CD4-positive, alpha-beta memory T cell (primary cell): ENCODE measurements at regions of chr3 and their contacts with region 1.

Region 1: DNA sequence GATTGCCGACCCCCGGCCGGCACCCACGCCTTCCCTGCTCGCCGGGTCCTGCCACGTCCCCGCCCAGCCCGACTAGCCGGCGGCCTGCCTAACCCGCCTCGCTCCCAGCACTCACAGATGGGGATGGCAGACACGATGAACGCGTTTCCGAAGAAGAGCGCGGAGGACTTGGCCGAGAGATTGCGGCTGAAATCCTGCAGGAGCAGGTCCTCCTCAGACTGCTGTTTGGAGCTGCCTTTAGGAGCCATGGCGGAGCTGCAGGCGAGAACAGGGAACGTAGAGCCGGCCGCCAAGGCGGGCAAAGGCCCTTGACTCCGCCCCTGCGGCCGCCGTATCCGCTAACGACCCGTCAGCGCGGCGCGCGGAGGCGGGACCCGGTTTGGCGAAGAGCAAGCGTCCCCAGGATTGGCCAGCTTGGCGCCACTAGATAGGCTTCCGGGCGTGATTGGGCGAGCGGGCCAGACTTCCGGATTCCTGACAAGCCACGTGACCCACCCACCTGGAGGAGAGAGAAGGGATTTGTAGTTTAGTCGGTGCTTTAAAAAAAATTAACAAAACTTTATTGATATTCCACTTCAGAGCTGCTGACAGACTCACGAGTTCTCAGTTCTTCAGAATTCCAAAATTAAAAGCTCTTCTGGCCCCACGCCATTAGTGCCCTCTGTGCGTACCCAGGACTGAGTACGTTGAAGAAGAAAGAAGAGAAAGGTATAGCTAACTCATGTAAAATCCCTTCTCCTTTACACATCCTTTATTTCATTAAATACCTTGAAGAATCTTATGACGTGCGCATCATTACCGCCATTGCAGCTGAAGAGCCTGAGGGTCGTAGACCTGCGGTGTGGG is at the start of gene SSR3:
- DNase-seq: peak; percentile 97 to 99 (median 99)
- H3K4me3 ChIP-seq: peak within 1 kb of the TSS; percentile 67 to 97
- H3K4me3 Mint-ChIP-seq: peak within 1 kb of the TSS; percentile 89 to 99 (median 98)
- H3K27ac ChIP-seq: peak within 1 kb of the TSS; percentile 72
- H3K27ac Mint-ChIP-seq: peak within 1 kb of the TSS; percentile 94 to 98 (median 95)
- H3K4me1 ChIP-seq: peaks cover 40% of the 10 kb centered on the region
- H3K4me1 Mint-ChIP-seq: peaks cover 31 to 55% (median 42%) of the 10 kb centered on the region in 4 donors
- H3K27me3 ChIP-seq: no peaks in the 10 kb centered on the region
- H3K27me3 Mint-ChIP-seq: peaks cover 0 to 5% of the 10 kb centered on the region in 2 donors
- total RNA-seq, gene SSR3: 132 to 138 TPM

Region 2: DNA sequence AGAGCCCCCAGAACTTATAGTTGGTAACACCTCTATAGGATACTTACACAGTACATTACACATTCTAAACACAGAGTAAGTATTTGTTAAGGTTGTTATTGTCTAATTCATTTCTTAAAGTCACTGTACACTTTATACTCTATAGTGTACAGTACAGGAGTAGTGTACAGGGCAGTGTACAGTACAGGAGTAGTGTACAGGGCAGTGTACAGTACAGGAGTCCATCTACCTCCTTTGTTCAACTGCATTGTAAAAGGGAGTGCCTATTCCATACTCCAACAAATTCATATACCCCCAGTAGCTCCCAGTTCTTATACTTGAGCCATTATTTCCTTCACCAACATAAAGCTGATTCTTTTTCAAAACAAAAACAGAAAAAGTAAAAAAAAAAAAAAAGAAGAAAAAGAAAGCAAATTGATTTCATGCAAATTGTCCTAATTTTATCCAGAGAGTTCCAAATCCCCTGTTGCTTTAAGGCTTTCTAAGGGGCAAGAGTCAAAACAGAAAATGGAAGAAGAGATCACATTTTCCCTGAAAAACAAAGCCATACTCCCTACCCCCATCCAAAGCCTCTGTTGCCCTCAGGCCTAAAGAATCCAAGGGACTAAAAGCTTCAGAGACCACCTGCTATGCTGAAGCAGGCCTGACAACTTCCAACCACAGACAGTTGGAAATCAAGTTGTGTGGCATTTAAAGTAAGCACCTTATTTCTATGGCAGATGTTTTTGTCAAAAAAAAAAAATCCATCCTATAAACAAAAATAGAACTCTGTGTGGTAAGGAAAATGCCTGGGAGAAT is 935.7 kb before region 1 on chr3:
- CTCF ChIA-PET with region 1: no interaction called
- POLR2A ChIA-PET with region 1: no interaction called
- intact Hi-C with region 1: no loop called
- DNase-seq: no peak
- H3K4me3 ChIP-seq: no peak overlapping the region
- H3K4me3 Mint-ChIP-seq: no peak overlapping the region
- H3K27ac ChIP-seq: no peak overlapping the region
- H3K27ac Mint-ChIP-seq: no peak overlapping the region
- H3K4me1 ChIP-seq: no peaks in the 10 kb centered on the region
- H3K4me1 Mint-ChIP-seq: no peaks in the 10 kb centered on the region
- H3K27me3 ChIP-seq: no peaks in the 10 kb centered on the region
- H3K27me3 Mint-ChIP-seq: peaks cover 0 to 2% of the 10 kb centered on the region in 2 donors

Region 3: DNA sequence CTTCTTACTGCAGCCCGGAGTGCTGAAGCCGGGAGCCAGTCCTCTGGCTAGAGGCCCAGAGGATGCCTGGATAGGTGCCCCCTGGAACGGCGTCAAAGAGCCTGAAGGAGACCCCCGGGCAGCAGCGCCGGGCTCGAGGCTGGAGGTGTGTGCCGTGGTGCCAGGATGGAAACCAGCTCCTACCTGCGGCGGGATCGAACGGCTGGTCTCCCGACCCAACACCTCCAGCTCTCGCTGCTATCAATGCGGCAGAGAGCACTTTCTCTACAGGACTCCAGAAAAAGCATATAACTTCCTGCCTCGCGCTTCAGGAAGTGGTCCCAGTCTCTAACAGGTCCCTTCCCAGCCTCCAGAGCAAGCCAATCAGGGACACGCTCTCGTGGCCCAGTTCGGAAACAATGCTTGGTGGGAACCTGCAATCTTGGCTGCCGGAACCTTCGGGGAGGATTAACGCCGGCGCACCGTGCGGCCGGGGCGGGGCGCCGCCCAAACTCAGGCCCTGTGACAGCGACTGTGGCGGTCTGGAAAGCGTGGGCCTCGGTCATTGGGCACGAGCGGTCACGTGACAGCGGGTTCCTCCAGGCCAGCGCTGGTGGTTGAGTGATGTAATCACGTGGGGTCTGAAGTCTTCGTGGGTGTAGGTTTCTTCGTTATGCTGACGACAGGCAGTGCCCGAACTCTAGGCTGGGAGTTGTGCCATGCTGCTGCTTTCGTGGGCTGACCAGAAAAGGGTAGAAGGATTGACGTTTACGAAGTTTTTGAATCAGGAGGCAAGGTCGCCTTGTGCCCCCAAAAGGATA is 700.7 kb before region 1 on chr3 and contains the start of gene SLC33A1:
- CTCF ChIA-PET with region 1: no interaction called
- POLR2A ChIA-PET with region 1: interaction called, 3 read pairs
- intact Hi-C with region 1: loop called (anchors 1 kb)
- DNase-seq: peak; percentile 99
- H3K4me3 ChIP-seq: peak within 1 kb of the TSS; percentile 98
- H3K4me3 Mint-ChIP-seq: peak within 1 kb of the TSS; percentile 89 to 98 (median 96)
- H3K27ac ChIP-seq: peak within 1 kb of the TSS; percentile 77
- H3K27ac Mint-ChIP-seq: peak within 1 kb of the TSS; percentile 94 to 100 (median 99)
- H3K4me1 ChIP-seq: peaks cover 44% of the 10 kb centered on the region
- H3K4me1 Mint-ChIP-seq: peaks cover 27 to 58% (median 38%) of the 10 kb centered on the region in 4 donors
- H3K27me3 ChIP-seq: no peaks in the 10 kb centered on the region
- H3K27me3 Mint-ChIP-seq: no peaks in the 10 kb centered on the region
- total RNA-seq, gene SLC33A1: 44.9 to 45.8 TPM

Region 4: DNA sequence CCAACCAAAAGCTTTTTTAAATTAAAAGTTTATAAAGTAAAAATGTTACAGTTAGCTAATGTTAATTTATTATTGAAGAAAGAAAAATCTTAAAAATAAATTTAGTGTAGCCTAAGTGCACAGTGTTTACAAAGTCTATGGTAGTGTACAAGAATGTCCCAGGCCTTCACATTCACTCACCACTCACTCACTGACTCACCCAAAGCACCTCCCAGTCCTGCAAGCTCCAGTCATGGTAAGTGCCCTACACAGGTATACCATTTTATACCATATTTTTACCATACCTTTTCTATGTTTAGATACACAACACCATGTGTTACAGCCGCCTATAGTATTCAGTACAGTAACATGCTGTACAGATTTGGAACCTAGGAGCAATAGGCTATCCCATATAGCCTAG is 29.3 kb before region 1 on chr3:
- CTCF ChIA-PET with region 1: interaction called, 4 read pairs
- POLR2A ChIA-PET with region 1: interaction called, 13 read pairs
- intact Hi-C with region 1: loop called (anchors 2 kb)
- DNase-seq: no peak
- H3K4me3 ChIP-seq: no peak overlapping the region
- H3K4me3 Mint-ChIP-seq: peak overlapping the region in 1 of 8 donors; percentile 24
- H3K27ac ChIP-seq: no peak overlapping the region
- H3K27ac Mint-ChIP-seq: no peak overlapping the region
- H3K4me1 ChIP-seq: peaks cover 6% of the 10 kb centered on the region
- H3K4me1 Mint-ChIP-seq: peaks cover 12 to 17% (median 14%) of the 10 kb centered on the region in 4 donors
- H3K27me3 ChIP-seq: no peaks in the 10 kb centered on the region
- H3K27me3 Mint-ChIP-seq: peaks cover 7 to 8% of the 10 kb centered on the region in 2 donors

Region 5: GRCh38 chr3:156664831-156665178 is 109.7 kb after region 1 on chr3:
- CTCF ChIA-PET with region 1: interaction called, 3 read pairs
- POLR2A ChIA-PET with region 1: interaction called, 14 read pairs
- intact Hi-C with region 1: no loop called
- DNase-seq: peak in 3 of 5 donors; percentile 27 to 45 (median 41)
- H3K4me3 ChIP-seq: peak overlapping the region in 1 of 2 donors; percentile 22
- H3K4me3 Mint-ChIP-seq: peak overlapping the region in 7 of 8 donors; percentile 60 to 85 (median 78)
- H3K27ac ChIP-seq: no peak overlapping the region
- H3K27ac Mint-ChIP-seq: peak overlapping the region; percentile 10 to 92 (median 81)
- H3K4me1 ChIP-seq: peaks cover 53% of the 10 kb centered on the region
- H3K4me1 Mint-ChIP-seq: peaks cover 45 to 56% (median 52%) of the 10 kb centered on the region in 4 donors
- H3K27me3 ChIP-seq: no peaks in the 10 kb centered on the region
- H3K27me3 Mint-ChIP-seq: no peaks in the 10 kb centered on the region

Region 6: DNA sequence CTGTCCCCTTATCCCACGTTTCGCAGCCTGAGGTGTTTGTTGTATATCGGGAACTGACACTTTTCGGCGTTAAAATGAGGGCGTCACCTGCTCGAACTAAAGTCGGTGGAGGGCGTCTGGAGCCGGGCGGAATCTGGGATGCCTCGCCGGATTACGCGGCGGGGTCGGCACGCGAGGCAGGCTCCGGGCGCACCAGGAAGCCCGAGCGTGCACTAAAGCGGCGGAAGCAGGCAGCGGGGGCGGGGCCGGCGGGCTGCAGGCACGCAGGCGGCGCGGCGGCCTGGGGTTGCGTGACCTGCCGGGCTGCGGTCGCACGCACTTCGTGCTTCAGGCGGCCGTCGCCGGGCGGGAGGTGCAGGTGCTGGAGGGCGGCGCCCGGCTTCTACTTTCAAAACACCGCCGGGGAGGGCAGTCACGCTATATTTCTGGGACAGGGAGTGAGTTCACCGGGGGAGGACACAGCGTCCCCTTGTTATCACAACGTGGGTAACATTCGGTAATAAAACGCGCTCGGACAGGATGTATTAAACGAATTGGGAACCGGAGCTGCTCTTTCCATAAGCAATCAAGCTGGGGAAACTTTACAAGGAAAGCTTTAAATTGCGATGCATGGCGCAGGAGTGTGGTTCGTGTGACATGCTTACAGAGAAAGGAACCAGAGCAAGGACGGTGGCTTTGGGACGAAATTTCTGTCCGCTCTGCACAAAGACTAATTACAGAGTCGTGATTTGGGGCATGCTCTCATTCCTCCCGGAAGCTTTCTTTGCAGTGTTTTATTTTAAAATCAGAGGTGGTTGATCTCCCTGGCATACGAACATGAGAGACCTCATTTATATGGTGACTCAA is 262.0 kb after region 1 on chr3:
- CTCF ChIA-PET with region 1: no interaction called
- POLR2A ChIA-PET with region 1: interaction called, 26 read pairs
- intact Hi-C with region 1: loop called (anchors 2 kb)
- DNase-seq: peak; percentile 79 to 85 (median 84)
- H3K4me3 ChIP-seq: peak overlapping the region; percentile 43 to 59
- H3K4me3 Mint-ChIP-seq: peak overlapping the region; percentile 91 to 97 (median 96)
- H3K27ac ChIP-seq: peak overlapping the region; percentile 73
- H3K27ac Mint-ChIP-seq: peak overlapping the region; percentile 91 to 98 (median 94)
- H3K4me1 ChIP-seq: peaks cover 39% of the 10 kb centered on the region
- H3K4me1 Mint-ChIP-seq: peaks cover 22 to 45% (median 35%) of the 10 kb centered on the region in 4 donors
- H3K27me3 ChIP-seq: no peaks in the 10 kb centered on the region
- H3K27me3 Mint-ChIP-seq: no peaks in the 10 kb centered on the region

Region 7: DNA sequence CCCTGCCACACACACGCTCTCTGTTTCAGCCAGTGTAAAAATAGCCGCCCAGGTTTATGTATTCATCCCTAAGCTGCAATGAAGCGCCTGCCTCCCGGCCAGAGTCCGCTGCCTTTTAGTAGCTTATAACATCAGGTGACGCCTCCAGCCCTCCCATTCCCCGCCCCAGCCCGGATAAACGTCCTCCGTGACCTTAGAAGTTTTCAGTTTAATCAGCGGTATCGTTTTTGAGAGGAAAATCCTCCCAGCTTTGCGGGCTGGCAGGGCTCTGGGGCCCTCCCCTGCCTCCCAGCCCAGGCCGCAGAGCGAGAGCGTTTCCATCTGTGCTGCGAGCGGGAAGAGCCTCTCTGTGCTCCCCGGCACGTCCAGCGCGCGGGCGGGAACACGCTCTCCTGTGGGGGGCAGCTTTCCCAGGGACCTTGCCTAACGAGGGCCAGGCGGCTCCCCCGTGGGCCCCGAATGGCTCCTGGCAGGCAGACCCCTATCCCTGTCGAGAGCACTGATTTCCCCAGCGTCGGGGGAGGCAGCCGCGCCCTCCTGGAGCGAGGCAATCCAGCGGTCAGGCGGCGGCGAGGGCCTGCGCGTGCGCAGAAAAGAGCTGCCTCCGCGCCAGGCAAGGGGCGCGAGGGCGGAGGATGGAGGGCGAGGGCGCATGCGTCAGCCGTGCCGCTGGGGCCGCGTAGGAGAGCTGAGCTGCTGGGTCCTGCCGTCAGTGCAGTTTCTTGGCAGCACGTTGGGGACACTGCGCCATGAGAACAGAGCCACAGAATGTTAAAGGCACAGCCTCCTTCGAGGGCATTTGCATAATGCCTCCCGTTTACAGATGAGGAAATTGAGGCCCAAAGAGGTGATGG is 533.8 kb after region 1 on chr3:
- CTCF ChIA-PET with region 1: interaction called, 4 read pairs
- POLR2A ChIA-PET with region 1: interaction called, 36 read pairs
- intact Hi-C with region 1: loop called (anchors 1 kb)
- DNase-seq: peak; percentile 94 to 95 (median 94)
- H3K4me3 ChIP-seq: peak overlapping the region; percentile 49 to 76
- H3K4me3 Mint-ChIP-seq: peak overlapping the region; percentile 79 to 93 (median 89)
- H3K27ac ChIP-seq: peak overlapping the region; percentile 91
- H3K27ac Mint-ChIP-seq: peak overlapping the region; percentile 99 to 100 (median 99)
- H3K4me1 ChIP-seq: peaks cover 41% of the 10 kb centered on the region
- H3K4me1 Mint-ChIP-seq: peaks cover 30 to 50% (median 41%) of the 10 kb centered on the region in 4 donors
- H3K27me3 ChIP-seq: no peaks in the 10 kb centered on the region
- H3K27me3 Mint-ChIP-seq: no peaks in the 10 kb centered on the region

Region 8: GRCh38 chr3:157159762-157160657 is 604.9 kb after region 1 on chr3 and contains the start of gene CCNL1:
- CTCF ChIA-PET with region 1: no interaction called
- POLR2A ChIA-PET with region 1: interaction called, 38 read pairs
- intact Hi-C with region 1: loop called (anchors 1 kb)
- DNase-seq: peak; percentile 93 to 97 (median 96)
- H3K4me3 ChIP-seq: peak within 1 kb of the TSS; percentile 87 to 97
- H3K4me3 Mint-ChIP-seq: peak within 1 kb of the TSS; percentile 92 to 99 (median 96)
- H3K27ac ChIP-seq: peak within 1 kb of the TSS; percentile 100
- H3K27ac Mint-ChIP-seq: peak within 1 kb of the TSS; percentile 99 to 100 (median 100)
- H3K4me1 ChIP-seq: peaks cover 57% of the 10 kb centered on the region
- H3K4me1 Mint-ChIP-seq: peaks cover 37 to 64% (median 51%) of the 10 kb centered on the region in 4 donors
- H3K27me3 ChIP-seq: no peaks in the 10 kb centered on the region
- H3K27me3 Mint-ChIP-seq: no peaks in the 10 kb centered on the region
- total RNA-seq, gene CCNL1: 327 to 330 TPM